SK-N-SH (cell line): ENCODE measurements at regions of chr7 and their contacts with region 1.

Region 1: DNA sequence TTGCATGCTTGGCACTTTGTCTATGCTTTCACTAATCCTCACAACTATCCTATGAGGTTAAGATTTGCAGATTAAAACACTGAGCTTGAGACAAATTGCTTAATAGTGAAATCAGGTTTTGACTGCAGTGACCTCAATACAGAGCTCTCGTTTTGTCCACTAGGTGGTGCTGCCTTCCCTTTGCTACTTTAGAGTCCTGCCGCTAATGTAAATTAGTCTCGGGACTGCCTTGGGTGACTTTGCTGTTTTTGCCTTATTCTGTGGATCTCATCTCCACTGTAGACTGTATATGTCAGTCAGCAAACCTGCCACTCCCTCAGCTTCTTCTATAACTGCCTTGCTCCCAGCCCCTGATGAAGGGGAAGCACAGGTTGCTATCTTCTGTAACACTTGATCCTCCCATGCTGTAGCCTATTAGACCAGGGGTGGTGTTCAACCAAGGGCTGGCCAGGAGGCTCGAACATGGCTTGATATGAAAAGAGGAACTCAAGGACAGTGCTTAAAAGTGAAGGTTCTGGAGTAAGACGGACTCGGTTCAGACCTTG is 26.0 kb downstream of the ASB4 start:
- DNase-seq: peak; percentile 48
- H3K4me3 ChIP-seq: no peak overlapping the region; a peak in 1 of 4 replicates
- H3K27ac ChIP-seq: no peak overlapping the region
- H3K4me1 ChIP-seq: peaks cover 0 to 4% of the 10 kb centered on the region in 2 experiments; a peak in 2 of 4 replicates
- H3K27me3 ChIP-seq: peaks cover 9% of the 10 kb centered on the region; the same call in 1 of the 2 replicates
- CTCF ChIP-seq: peak; percentile 99
- EP300 ChIP-seq: no peak
- RAD21 ChIP-seq: peak; percentile 74

Region 2: GRCh38 chr7:95491634-95492320 is 20.0 kb before region 1 on chr7:
- CTCF ChIA-PET with region 1: interaction called, 39 read pairs
- POLR2A ChIA-PET with region 1: no interaction called
- DNase-seq: no peak
- H3K4me3 ChIP-seq: no peak overlapping the region
- H3K27ac ChIP-seq: no peak overlapping the region
- H3K4me1 ChIP-seq: no peaks in the 10 kb centered on the region
- H3K27me3 ChIP-seq: no peaks in the 10 kb centered on the region
- CTCF ChIP-seq: no peak
- EP300 ChIP-seq: no peak
- RAD21 ChIP-seq: no peak

Region 3: GRCh38 chr7:95527033-95527775 is 15.4 kb after region 1 on chr7:
- CTCF ChIA-PET with region 1: interaction called, 97 read pairs
- POLR2A ChIA-PET with region 1: no interaction called
- DNase-seq: peak; percentile 77
- H3K4me3 ChIP-seq: no peak overlapping the region; a peak in 1 of 4 replicates
- H3K27ac ChIP-seq: no peak overlapping the region
- H3K4me1 ChIP-seq: peaks cover 0 to 3% of the 10 kb centered on the region in 2 experiments; a peak in 1 of 4 replicates
- H3K27me3 ChIP-seq: peaks cover 67% of the 10 kb centered on the region
- CTCF ChIP-seq: peak; percentile 99
- EP300 ChIP-seq: no peak
- RAD21 ChIP-seq: peak; percentile 94

Region 4: GRCh38 chr7:95577137-95577536 is 65.3 kb after region 1 on chr7:
- CTCF ChIA-PET with region 1: interaction called, 12 read pairs
- POLR2A ChIA-PET with region 1: no interaction called
- DNase-seq: no peak
- H3K4me3 ChIP-seq: no peak overlapping the region
- H3K27ac ChIP-seq: no peak overlapping the region
- H3K4me1 ChIP-seq: no peaks in the 10 kb centered on the region
- H3K27me3 ChIP-seq: peaks cover 31% of the 10 kb centered on the region; the same call in 1 of the 2 replicates
- CTCF ChIP-seq: no peak
- EP300 ChIP-seq: no peak
- RAD21 ChIP-seq: no peak

Region 5: GRCh38 chr7:95684037-95684436 is 172.2 kb after region 1 on chr7:
- CTCF ChIA-PET with region 1: interaction called, 292 read pairs
- POLR2A ChIA-PET with region 1: no interaction called
- DNase-seq: no peak
- H3K4me3 ChIP-seq: no peak overlapping the region
- H3K27ac ChIP-seq: no peak overlapping the region
- H3K4me1 ChIP-seq: no peaks in the 10 kb centered on the region
- H3K27me3 ChIP-seq: no peaks in the 10 kb centered on the region; the same call in 1 of the 2 replicates
- CTCF ChIP-seq: peak; percentile 60
- EP300 ChIP-seq: no peak
- RAD21 ChIP-seq: peak; percentile 37

Region 6: GRCh38 chr7:95700917-95701316 is 189.1 kb after region 1 on chr7:
- CTCF ChIA-PET with region 1: interaction called, 11 read pairs
- POLR2A ChIA-PET with region 1: no interaction called
- DNase-seq: no peak
- H3K4me3 ChIP-seq: no peak overlapping the region
- H3K27ac ChIP-seq: no peak overlapping the region
- H3K4me1 ChIP-seq: peaks cover 0 to 4% of the 10 kb centered on the region in 2 experiments; a peak in 2 of 4 replicates
- H3K27me3 ChIP-seq: no peaks in the 10 kb centered on the region
- CTCF ChIP-seq: no peak
- EP300 ChIP-seq: peak in 1 of 2 experiments; percentile 39; a peak in 1 of 4 replicates
- RAD21 ChIP-seq: no peak

Region 7: GRCh38 chr7:95753440-95753839 is 241.7 kb after region 1 on chr7:
- CTCF ChIA-PET with region 1: no interaction called
- POLR2A ChIA-PET with region 1: no interaction called
- DNase-seq: no peak
- H3K4me3 ChIP-seq: no peak overlapping the region
- H3K27ac ChIP-seq: no peak overlapping the region
- H3K4me1 ChIP-seq: no peaks in the 10 kb centered on the region
- H3K27me3 ChIP-seq: no peaks in the 10 kb centered on the region; the same call in 1 of the 2 replicates
- CTCF ChIP-seq: no peak
- EP300 ChIP-seq: no peak
- RAD21 ChIP-seq: no peak